ENCODE measurements at regions of chr17 and their contacts with region 1.

Region 1: GRCh38 chr17:47720754-47721533 is 12.1 kb upstream of the TBX21 start:
- DNase-seq: peak; percentile 95
- H3K4me3 Mint-ChIP-seq: peak overlapping the region; percentile 76
- H3K27ac Mint-ChIP-seq: peak overlapping the region; percentile 93
- H3K4me1 Mint-ChIP-seq: peaks cover 80% of the 10 kb centered on the region
- H3K27me3 Mint-ChIP-seq: no peaks in the 10 kb centered on the region

Region 2: DNA sequence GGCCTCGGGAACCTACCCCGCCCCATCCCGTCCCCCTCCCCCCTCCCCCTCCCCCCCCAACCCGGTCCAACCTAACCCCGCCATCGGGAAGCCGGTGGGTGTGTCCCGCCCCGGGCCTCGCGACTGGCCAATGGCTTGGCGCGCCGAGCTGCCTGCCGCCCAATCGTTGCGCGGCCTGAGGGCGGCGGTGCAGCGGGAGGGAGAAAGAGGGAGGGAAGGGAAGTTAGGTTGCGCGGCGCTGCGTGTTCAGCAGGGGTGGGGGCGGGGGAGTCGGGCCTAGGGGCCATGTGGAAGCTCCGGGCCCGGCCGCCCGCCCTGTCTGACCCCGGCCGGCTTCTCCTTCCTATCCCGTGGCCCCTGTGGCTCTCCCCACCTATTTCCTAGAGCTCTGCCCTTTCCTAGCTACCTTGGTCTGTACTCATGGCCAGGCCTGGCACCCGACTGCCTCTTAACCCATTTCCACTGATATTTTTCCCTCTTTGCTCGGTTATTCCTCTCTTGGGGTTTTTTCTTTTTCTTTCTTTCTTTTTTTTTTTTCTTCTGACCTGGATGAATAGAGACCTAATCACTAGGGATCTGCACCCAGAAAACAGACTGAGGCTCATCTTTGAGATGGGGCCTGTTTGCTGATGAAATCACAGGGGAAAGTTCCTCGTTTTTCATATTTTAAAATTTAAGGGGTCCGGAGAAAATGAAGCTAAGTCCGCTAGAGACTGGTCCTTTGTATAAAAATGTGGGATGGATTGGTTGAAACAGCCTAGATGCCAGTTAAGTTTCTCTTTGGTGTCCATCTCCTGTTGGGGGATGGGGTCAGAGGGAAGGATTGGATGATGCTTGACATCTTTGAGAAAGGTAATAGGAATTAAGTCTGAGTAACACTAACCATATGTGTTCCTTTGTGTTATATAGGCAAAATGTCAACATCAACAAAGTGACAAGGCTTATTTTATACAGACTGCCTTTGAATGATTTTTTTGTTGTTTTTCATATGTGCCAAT is 70.1 kb before region 1 on chr17:
- intact Hi-C with region 1: loop called (anchors 5 kb)
- DNase-seq: peak; percentile 98
- H3K4me3 Mint-ChIP-seq: peak overlapping the region; percentile 92
- H3K27ac Mint-ChIP-seq: peak overlapping the region; percentile 90
- H3K4me1 Mint-ChIP-seq: peaks cover 53% of the 10 kb centered on the region
- H3K27me3 Mint-ChIP-seq: no peaks in the 10 kb centered on the region

Region 3: GRCh38 chr17:47663912-47664625 is 56.9 kb before region 1 on chr17:
- intact Hi-C with region 1: loop called (anchors 5 kb)
- DNase-seq: peak; percentile 89
- H3K4me3 Mint-ChIP-seq: peak overlapping the region; percentile 15
- H3K27ac Mint-ChIP-seq: peak overlapping the region; percentile 77
- H3K4me1 Mint-ChIP-seq: peaks cover 35% of the 10 kb centered on the region
- H3K27me3 Mint-ChIP-seq: no peaks in the 10 kb centered on the region

Region 4: GRCh38 chr17:47705536-47706530 is 15.1 kb before region 1 on chr17:
- intact Hi-C with region 1: loop called (anchors 1 kb)
- DNase-seq: peak; percentile 82
- H3K4me3 Mint-ChIP-seq: peak overlapping the region; percentile 79
- H3K27ac Mint-ChIP-seq: peak overlapping the region; percentile 98
- H3K4me1 Mint-ChIP-seq: peaks cover 73% of the 10 kb centered on the region
- H3K27me3 Mint-ChIP-seq: no peaks in the 10 kb centered on the region

Region 5: DNA sequence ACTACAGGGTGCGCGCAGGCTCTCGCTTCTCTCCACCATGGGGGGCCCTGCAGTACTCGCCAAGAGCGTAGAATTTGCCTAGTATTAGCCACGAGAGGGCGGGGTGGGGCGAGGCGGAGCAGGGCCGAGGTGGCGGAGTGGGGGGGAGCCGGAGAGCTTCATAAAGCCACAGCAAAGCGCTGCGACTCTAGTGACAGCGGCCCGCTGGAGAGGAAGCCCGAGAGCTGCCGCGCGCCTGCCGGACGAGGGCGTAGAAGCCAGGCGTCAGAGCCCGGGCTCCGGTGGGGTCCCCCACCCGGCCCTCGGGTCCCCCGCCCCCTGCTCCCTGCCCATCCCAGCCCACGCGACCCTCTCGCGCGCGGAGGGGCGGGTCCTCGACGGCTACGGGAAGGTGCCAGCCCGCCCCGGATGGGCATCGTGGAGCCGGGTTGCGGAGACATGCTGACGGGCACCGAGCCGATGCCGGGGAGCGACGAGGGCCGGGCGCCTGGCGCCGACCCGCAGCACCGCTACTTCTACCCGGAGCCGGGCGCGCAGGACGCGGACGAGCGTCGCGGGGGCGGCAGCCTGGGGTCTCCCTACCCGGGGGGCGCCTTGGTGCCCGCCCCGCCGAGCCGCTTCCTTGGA is 12.2 kb after region 1 on chr17 and contains the start of gene TBX21:
- intact Hi-C with region 1: loop called (anchors 1 kb)
- DNase-seq: peak; percentile 96
- H3K4me3 Mint-ChIP-seq: peak within 1 kb of the TSS; percentile 94
- H3K27ac Mint-ChIP-seq: peak within 1 kb of the TSS; percentile 93
- H3K4me1 Mint-ChIP-seq: peaks cover 69% of the 10 kb centered on the region
- H3K27me3 Mint-ChIP-seq: no peaks in the 10 kb centered on the region
- total RNA-seq, gene TBX21: 63.0 and 66.4 TPM in 2 replicates